Thyroid gland (tissue), 4 donors: ENCODE measurements at regions of chr3 and their contacts with region 1.

Region 1: GRCh38 chr3:46078712-46079400 is 51.6 kb upstream of the XCR1 start:
- DNase-seq: peak; percentile 94 to 96
- H3K4me3 ChIP-seq: no peak overlapping the region
- H3K27ac ChIP-seq: no peak overlapping the region
- H3K4me1 ChIP-seq: peaks cover 0 to 4% of the 10 kb centered on the region in 2 donors
- H3K27me3 ChIP-seq: no peaks in the 10 kb centered on the region
- CTCF ChIP-seq: peak; percentile 94 to 100 (median 98)
- POLR2A ChIP-seq: no peak

Region 2: DNA sequence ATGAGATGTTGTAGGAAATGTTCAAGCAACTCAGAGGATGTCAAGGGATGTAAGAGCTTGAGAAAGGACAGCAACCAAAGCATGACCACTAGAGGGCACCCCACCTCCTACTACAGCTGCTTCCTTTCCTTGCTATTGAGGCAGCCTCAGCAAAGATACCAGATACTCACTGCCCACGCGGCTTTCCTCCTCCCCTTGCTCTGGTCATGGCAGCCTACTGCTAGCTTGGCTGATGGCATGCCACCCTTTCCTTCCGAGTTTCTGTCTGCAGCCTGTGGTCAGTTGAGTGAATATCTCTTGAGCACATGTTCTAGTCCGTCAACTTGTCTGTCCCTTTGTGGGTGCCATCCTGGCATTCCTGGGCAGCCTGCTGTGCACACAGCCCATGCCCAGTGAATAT is 140.0 kb before region 1 on chr3:
- intact Hi-C with region 1: loop called (anchors 2 kb)
- DNase-seq: peak; percentile 91 to 92
- H3K4me3 ChIP-seq: no peak overlapping the region
- H3K27ac ChIP-seq: peak overlapping the region; percentile 54 to 70 (median 67)
- H3K4me1 ChIP-seq: peaks cover 19 to 24% of the 10 kb centered on the region in 2 donors
- H3K27me3 ChIP-seq: no peaks in the 10 kb centered on the region
- CTCF ChIP-seq: peak; percentile 67 to 96 (median 87)
- POLR2A ChIP-seq: no peak